ENCODE measurements at regions of chr19 and their contacts with region 1.

Region 1: GRCh38 chr19:55258828-55259539 is at the start of gene PPP6R1:
- DNase-seq: peak; percentile 98
- ATAC-seq: peak; percentile 94 to 98 (median 96)
- H3K4me3 ChIP-seq: peak within 1 kb of the TSS; percentile 68 to 99 (median 94)
- H3K27ac ChIP-seq: peak within 1 kb of the TSS; percentile 78 to 98 (median 92)
- H3K4me1 ChIP-seq: peaks cover 11 to 51% (median 48%) of the 10 kb centered on the region in 9 donors
- H3K27me3 ChIP-seq: no peaks in the 10 kb centered on the region
- CTCF ChIP-seq: no peak
- total RNA-seq, gene PPP6R1: 31.1 to 51.3 (median 39.0) TPM

Region 2: DNA sequence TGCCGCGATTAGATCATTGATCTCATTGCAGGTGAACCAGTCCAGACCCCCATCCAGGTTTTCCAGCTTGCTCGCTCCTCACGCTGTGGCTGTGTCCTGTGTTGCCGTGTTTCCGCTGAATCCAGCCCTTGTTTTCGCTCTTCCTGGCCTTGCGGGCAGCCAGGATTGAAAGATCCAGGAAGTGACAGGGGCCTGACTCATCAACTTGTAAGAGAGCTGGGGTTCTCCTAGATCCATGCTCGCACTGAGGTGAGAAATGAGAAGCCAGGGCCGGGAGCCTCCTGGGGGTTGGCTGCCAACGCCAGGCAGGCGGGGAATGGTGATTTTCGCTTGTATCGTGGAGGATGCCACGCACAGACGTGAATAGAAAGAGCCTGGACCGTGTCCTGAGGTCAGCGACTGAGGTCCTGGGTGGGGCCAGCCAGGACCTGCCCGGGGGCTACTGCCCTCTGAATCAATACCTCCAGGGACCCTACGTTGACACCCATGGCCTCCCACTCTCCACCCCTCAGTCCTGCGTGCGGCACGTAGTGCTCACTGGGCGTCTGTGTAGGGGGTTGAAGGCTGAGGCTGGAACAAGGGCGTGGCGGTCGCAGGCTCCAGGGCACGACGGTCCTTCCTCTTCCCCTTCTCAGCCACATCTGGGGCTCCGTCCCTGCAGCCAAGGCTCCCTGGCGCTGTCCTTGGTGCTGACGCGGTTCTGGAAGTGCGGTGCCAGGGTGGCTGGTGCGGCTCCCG is 42.4 kb before region 1 on chr19:
- intact Hi-C with region 1: loop called in 2 of 10 experiments (anchors 2 to 5 kb)
- DNase-seq: peak; percentile 85
- ATAC-seq: peak; percentile 84 to 96 (median 94)
- H3K4me3 ChIP-seq: peak overlapping the region in 9 of 10 donors; percentile 32 to 62 (median 56)
- H3K27ac ChIP-seq: peak overlapping the region in 9 of 10 donors; percentile 28 to 88 (median 74)
- H3K4me1 ChIP-seq: peaks cover 4 to 18% (median 13%) of the 10 kb centered on the region in 9 donors
- H3K27me3 ChIP-seq: no peaks in the 10 kb centered on the region
- CTCF ChIP-seq: no peak

Region 3: GRCh38 chr19:55407800-55408532 is 149.0 kb after region 1 on chr19:
- intact Hi-C with region 1: loop called in 1 of 10 experiments (anchors 5 kb)
- DNase-seq: peak; percentile 98 to 99
- ATAC-seq: peak; percentile 96 to 99 (median 98)
- H3K4me3 ChIP-seq: peak overlapping the region; percentile 77 to 99 (median 92)
- H3K27ac ChIP-seq: peak overlapping the region; percentile 88 to 99 (median 96)
- H3K4me1 ChIP-seq: peaks cover 4 to 27% (median 17%) of the 10 kb centered on the region in 9 donors
- H3K27me3 ChIP-seq: no peaks in the 10 kb centered on the region
- CTCF ChIP-seq: no peak